ENCODE measurements at regions of chr2 and their contacts with region 1.

Region 1: DNA sequence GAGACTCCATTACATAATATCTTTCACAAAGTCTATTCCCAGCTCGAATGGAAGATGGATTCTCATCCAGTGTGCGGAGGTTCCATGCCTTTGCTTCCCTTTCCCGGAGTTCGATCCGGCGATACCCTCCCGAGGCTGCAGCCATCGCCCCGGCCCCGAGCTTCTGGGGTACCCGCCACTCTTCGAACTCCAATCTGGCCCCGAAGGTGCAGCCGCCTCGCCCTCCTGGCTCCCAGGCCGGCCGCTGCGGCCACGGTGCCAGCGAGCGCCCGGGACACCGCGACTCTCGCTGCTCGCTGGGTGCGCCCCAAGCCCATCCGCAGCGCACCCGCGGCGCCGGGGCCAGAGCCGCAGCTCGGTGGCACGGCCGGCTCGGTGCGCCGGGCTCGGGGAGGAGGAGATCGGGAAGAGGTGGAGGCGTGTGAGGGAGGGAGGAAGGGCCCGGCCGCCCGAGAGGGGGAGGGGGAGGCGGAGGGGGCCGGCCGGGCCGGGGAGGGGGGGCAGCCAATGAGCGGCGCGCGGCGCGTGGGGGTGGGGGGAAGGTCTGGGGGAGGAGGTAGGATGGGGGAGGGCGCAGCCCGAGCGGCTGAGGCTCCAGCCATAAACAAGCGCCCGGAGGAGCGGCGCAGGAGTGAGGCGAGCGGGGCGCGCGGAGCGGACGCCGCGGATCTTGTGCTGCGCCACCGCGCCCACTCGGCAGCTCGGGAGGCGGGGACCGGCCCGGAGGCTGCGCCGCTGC is at the start of gene CRIM1:
- DNase-seq: peak; percentile 92
- ATAC-seq: peak; percentile 90
- total RNA-seq, gene CRIM1: 21.7 TPM

Region 2: DNA sequence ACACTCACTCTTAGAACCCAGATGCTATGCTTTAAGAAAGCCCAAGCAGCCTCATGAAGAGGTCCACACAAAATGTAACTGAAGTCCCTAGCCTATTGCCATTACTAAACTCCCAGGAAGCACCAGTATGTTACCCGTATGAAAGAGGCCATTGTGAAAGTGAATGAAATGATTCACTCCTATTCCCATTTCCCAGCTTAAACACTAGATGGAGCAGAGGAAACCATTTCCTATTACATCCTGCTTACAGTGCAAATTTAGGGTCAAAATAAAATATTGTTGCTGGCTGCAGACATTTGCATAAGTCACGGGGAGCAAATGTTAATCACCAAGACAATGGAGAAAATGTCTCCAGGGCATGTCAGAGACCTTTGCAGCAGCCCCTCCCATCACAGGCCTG is 989.5 kb before region 1 on chr2:
- intact Hi-C with region 1: no loop called
- DNase-seq: no peak
- ATAC-seq: no peak

Region 3: GRCh38 chr2:36246320-36246990 is 108.9 kb before region 1 on chr2:
- intact Hi-C with region 1: no loop called
- DNase-seq: no peak
- ATAC-seq: no peak

Region 4: GRCh38 chr2:36416370-36417165 is 61.2 kb after region 1 on chr2:
- intact Hi-C with region 1: loop called (anchors 2 kb)
- DNase-seq: peak; percentile 71
- ATAC-seq: peak; percentile 84

Region 5: DNA sequence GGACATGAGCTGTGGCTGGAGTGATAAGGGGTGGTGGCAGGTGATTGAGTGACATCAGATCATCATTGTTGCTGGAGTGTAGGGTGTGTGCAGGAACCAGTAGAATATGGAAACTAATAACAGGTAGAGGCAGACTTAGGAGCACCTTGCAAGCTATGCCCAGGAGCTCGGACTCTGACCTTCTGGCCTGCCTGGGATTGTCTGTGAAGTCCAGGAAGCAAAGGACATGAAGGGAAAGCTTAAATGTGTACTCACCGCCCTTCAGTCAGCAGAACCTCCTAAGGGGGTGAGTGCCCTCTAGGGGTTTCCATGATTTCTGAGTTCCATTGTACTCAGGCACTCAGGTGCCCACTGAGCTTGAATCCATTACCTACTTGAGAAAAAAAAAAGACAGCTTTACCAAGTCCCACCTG is 104.4 kb after region 1 on chr2:
- intact Hi-C with region 1: loop called (anchors 5 kb)
- DNase-seq: no peak
- ATAC-seq: no peak

Region 6: DNA sequence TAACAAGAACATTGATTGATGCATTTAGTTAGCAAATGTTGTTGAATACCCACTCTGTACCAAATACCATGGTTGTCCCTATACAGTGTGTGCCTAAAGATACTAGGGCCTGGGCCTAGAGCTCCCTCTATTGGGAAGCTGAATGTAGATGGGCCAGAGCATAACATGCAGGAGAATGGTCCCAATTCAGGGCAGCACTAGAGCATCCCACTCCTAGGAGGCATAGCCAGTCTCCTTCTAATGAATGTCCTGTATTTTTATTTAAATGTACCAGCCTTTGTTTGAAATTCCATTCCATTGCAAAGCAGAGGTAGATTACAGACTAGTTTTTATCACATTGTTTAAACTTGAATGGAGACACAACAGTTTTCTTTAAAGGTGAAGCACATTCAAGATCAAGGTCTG is 152.1 kb after region 1 on chr2:
- intact Hi-C with region 1: loop called (anchors 1 kb)
- DNase-seq: no peak
- ATAC-seq: peak; percentile 92

Region 7: GRCh38 chr2:36597532-36598377 is 242.4 kb after region 1 on chr2 and contains the start of gene FEZ2:
- intact Hi-C with region 1: loop called (anchors 1 kb)
- DNase-seq: peak; percentile 90
- ATAC-seq: peak; percentile 99
- total RNA-seq, gene FEZ2: 36.0 TPM

Region 8: DNA sequence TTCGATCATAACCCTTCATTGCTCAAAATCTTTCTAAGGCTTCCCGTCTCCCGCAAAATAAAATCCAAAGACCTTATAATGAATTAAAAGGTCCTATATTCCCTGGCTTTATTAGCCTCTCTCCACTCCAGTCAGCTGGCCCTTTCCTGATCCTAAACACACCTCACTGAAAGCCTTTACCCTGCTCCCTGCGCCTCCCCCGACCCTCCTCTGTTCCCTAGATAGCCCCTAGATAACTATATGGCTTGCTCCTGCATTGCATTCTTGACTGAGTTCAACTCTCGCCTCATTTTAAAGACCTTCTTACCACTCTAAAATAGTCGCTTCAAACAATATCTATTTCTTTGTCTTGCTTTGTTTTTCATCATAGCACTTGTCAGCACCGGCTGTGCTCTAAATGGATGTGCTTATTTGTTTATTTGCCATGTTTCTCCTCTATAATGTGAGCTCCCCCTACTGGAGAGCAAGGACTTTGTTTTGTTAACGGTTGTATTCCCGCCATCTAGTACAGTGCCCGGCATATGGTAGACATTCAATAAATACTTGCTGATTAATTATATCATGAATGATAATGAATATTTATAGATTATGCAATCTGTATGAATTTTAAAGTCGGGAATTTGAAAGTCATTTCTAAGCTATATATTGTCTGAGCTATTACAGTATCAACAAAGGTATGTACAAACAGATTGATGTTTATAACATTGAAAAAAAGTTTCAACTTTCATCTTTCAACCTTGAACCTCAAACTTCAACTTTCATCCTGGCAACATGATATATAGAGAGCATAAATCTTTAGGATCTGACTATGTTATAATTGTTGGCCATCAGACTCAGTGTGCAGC is 308.8 kb after region 1 on chr2:
- intact Hi-C with region 1: loop called (anchors 1 kb)
- DNase-seq: no peak
- ATAC-seq: peak; percentile 85

Region 9: GRCh38 chr2:36785179-36785795 is 430.0 kb after region 1 on chr2:
- intact Hi-C with region 1: loop called (anchors 5 kb)
- DNase-seq: no peak
- ATAC-seq: peak; percentile 53

Measured in Right ventricle myocardium inferior (tissue), 1 donor.